PC-9 (cell line): ENCODE measurements at regions of chr18 and their contacts with region 1.

Region 1: GRCh38 chr18:23619388-23619881 is 33.1 kb upstream of the NPC1 start:
- DNase-seq: no peak
- H3K4me3 ChIP-seq: no peak overlapping the region
- H3K27ac ChIP-seq: no peak overlapping the region
- H3K4me1 ChIP-seq: no peaks in the 10 kb centered on the region
- H3K27me3 ChIP-seq: no peaks in the 10 kb centered on the region
- CTCF ChIP-seq: no peak

Region 2: DNA sequence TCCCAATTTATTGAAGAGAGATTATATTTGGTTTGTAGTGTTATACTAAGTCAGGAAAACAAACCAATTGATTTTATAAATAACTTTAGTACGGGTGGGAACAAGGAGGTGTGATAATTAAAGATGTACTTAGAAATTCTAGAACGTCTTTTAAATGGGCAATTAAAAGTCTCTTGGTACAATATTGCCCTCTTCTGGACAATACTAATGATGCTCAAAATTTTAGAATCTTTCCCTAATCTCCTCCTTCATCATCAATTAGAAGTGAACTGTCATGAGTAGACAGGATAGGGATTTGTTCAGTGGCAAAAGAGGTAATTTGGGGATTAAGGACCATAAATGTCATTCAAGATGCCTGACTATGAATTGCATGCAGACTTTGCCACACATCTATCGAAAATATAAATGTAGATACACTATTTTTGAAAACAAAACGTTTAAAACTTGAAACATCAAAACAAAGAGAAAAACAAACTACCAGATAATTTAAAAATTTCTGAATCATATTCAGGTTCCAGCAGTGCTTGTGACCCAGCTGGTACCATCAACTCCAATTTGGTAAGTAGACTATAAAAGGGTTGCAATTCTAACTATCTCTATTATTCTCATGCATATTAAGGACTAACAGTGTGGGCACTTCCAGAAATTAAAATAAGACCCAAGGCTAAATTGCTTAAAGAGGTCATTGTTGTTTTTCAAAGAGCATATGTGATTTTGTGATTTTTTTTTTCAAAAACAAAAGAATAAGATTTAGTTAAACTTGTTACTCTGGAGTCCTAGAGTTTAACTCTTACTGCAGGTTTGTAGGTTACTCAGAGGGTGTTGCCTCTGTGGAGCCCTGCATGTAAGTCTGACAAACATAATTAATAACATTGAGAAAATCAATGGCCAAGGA is 193.4 kb after region 1 on chr18:
- CTCF ChIA-PET with region 1: no interaction called
- POLR2A ChIA-PET with region 1: no interaction called
- intact Hi-C with region 1: loop called (anchors 1 kb)
- DNase-seq: no peak
- H3K4me3 ChIP-seq: no peak overlapping the region
- H3K27ac ChIP-seq: no peak overlapping the region
- H3K4me1 ChIP-seq: no peaks in the 10 kb centered on the region
- H3K27me3 ChIP-seq: no peaks in the 10 kb centered on the region
- CTCF ChIP-seq: peak; percentile 64